ENCODE measurements at regions of chr19 and their contacts with region 1.

Region 1: GRCh38 chr19:39052243-39052746 is 19.9 kb upstream of the FBXO27 start:
- DNase-seq: peak; percentile 19 to 83 (median 58)
- ATAC-seq: peak; percentile 56 to 70 (median 64)
- H3K4me3 ChIP-seq: no peak overlapping the region
- H3K4me3 Mint-ChIP-seq: no peak overlapping the region
- H3K27ac ChIP-seq: no peak overlapping the region
- H3K27ac Mint-ChIP-seq: no peak overlapping the region
- H3K4me1 ChIP-seq: peaks cover 0 to 6% of the 10 kb centered on the region in 2 experiments
- H3K4me1 Mint-ChIP-seq: peaks cover 0 to 2% (median 0%) of the 10 kb centered on the region in 3 donors
- H3K27me3 ChIP-seq: peaks cover 0 to 13% of the 10 kb centered on the region in 2 experiments
- H3K27me3 Mint-ChIP-seq: peaks cover 0 to 5% of the 10 kb centered on the region in 2 donors

Region 2: GRCh38 chr19:38812841-38813320 is 239.4 kb before region 1 on chr19 and contains the start of gene LGALS4:
- CTCF ChIA-PET with region 1: no interaction called
- POLR2A ChIA-PET with region 1: no interaction called
- DNase-seq: no peak
- ATAC-seq: peak in 1 of 4 experiments; percentile 16
- H3K4me3 ChIP-seq: no peak within 1 kb of the TSS
- H3K4me3 Mint-ChIP-seq: no peak within 1 kb of the TSS
- H3K27ac ChIP-seq: no peak within 1 kb of the TSS
- H3K27ac Mint-ChIP-seq: no peak within 1 kb of the TSS
- H3K4me1 ChIP-seq: no peaks in the 10 kb centered on the region
- H3K4me1 Mint-ChIP-seq: no peaks in the 10 kb centered on the region
- H3K27me3 ChIP-seq: no peaks in the 10 kb centered on the region
- H3K27me3 Mint-ChIP-seq: no peaks in the 10 kb centered on the region
- total RNA-seq, gene LGALS4: 3.8 to 8.8 (median 6.6) TPM

Region 3: GRCh38 chr19:39014037-39014436 is 38.3 kb before region 1 on chr19:
- CTCF ChIA-PET with region 1: no interaction called
- POLR2A ChIA-PET with region 1: no interaction called
- DNase-seq: no peak
- ATAC-seq: no peak
- H3K4me3 ChIP-seq: no peak overlapping the region
- H3K4me3 Mint-ChIP-seq: no peak overlapping the region
- H3K27ac ChIP-seq: no peak overlapping the region
- H3K27ac Mint-ChIP-seq: no peak overlapping the region
- H3K4me1 ChIP-seq: no peaks in the 10 kb centered on the region
- H3K4me1 Mint-ChIP-seq: no peaks in the 10 kb centered on the region
- H3K27me3 ChIP-seq: peaks cover 0 to 18% of the 10 kb centered on the region in 2 experiments
- H3K27me3 Mint-ChIP-seq: peaks cover 14 to 21% of the 10 kb centered on the region in 2 donors

Region 4: GRCh38 chr19:39078436-39079200 is 26.3 kb after region 1 on chr19:
- CTCF ChIA-PET with region 1: interaction called, 4 to 10 read pairs
- POLR2A ChIA-PET with region 1: no interaction called
- DNase-seq: no peak
- ATAC-seq: no peak
- H3K4me3 ChIP-seq: no peak overlapping the region
- H3K4me3 Mint-ChIP-seq: no peak overlapping the region
- H3K27ac ChIP-seq: no peak overlapping the region
- H3K27ac Mint-ChIP-seq: no peak overlapping the region
- H3K4me1 ChIP-seq: peaks cover 0 to 21% of the 10 kb centered on the region in 2 experiments
- H3K4me1 Mint-ChIP-seq: peaks cover 17 to 27% (median 23%) of the 10 kb centered on the region in 3 donors
- H3K27me3 ChIP-seq: peaks cover 2 to 21% of the 10 kb centered on the region in 2 experiments
- H3K27me3 Mint-ChIP-seq: peaks cover 25 to 33% of the 10 kb centered on the region in 2 donors

Measured in T-cell (primary cell).